Adrenal gland (tissue), 19 donors: ENCODE measurements at regions of chr3 and their contacts with region 1.

Region 1: GRCh38 chr3:157089455-157090221 is 70.3 kb downstream of the CCNL1 start:
- DNase-seq: peak; percentile 25 to 59 (median 31)
- H3K4me3 ChIP-seq: peak overlapping the region in 1 of 4 donors; percentile 53
- H3K27ac ChIP-seq: peak overlapping the region; percentile 93 to 100 (median 97)
- H3K4me1 ChIP-seq: peaks cover 19 to 25% of the 10 kb centered on the region in 2 donors
- H3K27me3 ChIP-seq: no peaks in the 10 kb centered on the region
- CTCF ChIP-seq: no peak
- POLR2A ChIP-seq: no peak

Region 2: DNA sequence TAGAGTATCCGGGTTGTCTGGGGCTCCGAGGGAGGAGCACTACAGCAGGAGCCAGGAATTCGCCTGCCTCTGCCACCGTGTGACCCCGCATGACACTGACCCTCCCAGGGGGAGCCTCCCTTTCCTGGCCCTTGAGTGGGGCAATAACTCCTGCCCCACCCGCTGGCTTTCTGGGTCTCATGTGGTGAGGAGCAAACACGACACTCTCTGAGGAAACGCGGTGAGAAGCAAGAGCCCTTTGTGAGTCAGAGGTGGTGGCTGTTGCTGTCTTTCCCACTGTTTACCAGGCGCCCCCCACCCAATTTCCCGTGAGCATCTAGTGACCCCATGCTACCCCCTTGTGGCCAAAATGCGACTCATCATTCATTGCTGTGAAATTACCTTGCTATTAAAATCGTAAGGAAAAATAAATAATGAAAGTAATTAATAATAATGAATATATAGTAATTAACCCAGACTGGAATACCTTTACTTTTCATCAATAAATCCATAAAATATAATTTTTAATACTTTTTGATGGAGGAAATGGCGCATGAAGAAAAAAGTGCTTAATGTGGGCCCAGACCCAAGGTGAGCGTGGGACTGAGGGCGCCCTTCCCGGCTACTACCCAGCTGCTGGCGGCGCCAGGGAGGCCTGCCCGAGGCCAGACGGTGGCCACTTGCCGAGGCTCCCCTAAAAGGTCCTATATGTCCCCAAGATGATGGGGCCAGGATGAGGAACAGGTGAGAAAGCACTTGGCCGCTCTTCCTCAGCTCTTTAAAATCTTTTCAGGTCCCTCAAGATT is 41.0 kb after region 1 on chr3:
- intact Hi-C with region 1: loop called (anchors 5 kb)
- DNase-seq: peak in 2 of 7 donors; percentile 35 to 38
- H3K4me3 ChIP-seq: no peak overlapping the region
- H3K27ac ChIP-seq: peak overlapping the region in 2 of 5 donors; percentile 63 to 75
- H3K4me1 ChIP-seq: peaks cover 19 to 43% of the 10 kb centered on the region in 2 donors
- H3K27me3 ChIP-seq: no peaks in the 10 kb centered on the region
- CTCF ChIP-seq: peak; percentile 18 to 60 (median 53)
- POLR2A ChIP-seq: no peak

Region 3: DNA sequence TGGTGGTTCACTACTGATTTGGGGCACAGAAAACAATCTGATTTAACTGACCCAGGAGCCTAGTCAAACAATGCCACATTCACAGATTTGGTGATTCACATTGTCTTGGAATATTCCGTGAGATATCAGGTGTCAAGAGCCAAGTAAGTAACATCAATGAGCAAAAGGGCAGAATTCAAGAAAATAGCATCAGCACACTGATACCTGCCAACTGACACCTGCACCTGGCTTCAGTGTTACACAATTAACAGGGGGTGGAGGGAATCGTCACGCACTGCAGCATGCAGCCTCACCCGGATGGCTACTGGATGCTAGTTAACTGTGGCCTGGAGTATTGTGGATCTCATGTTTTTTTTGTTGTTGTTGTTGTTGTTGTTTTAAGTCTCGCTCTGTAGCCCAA is 52.7 kb after region 1 on chr3:
- intact Hi-C with region 1: no loop called
- DNase-seq: no peak
- H3K4me3 ChIP-seq: no peak overlapping the region
- H3K27ac ChIP-seq: no peak overlapping the region
- H3K4me1 ChIP-seq: peaks cover 0 to 11% of the 10 kb centered on the region in 2 donors
- H3K27me3 ChIP-seq: no peaks in the 10 kb centered on the region
- CTCF ChIP-seq: no peak
- POLR2A ChIP-seq: no peak